Activated naive CD4-positive, alpha-beta T cell treated with anti-CD3 and anti-CD28 coated beads for 36 hours (primary cell): ENCODE measurements at regions of chr12 and their contacts with region 1.

Region 1: GRCh38 chr12:50400598-50401364 is at the start of gene LARP4:
- DNase-seq: peak; percentile 94
- H3K4me3 Mint-ChIP-seq: peak within 1 kb of the TSS; percentile 99
- H3K27ac Mint-ChIP-seq: peak within 1 kb of the TSS; percentile 87
- H3K4me1 Mint-ChIP-seq: peaks cover 19% of the 10 kb centered on the region
- H3K27me3 Mint-ChIP-seq: peaks cover 2% of the 10 kb centered on the region
- total RNA-seq, gene LARP4: 44.7 to 44.9 TPM

Region 2: GRCh38 chr12:50211392-50212070 is 189.2 kb before region 1 on chr12:
- CTCF ChIA-PET with region 1: interaction called, 3 read pairs
- intact Hi-C with region 1: loop called (anchors 2 kb)
- DNase-seq: peak; percentile 38
- H3K4me3 Mint-ChIP-seq: peak overlapping the region; percentile 10
- H3K27ac Mint-ChIP-seq: peak overlapping the region; percentile 88
- H3K4me1 Mint-ChIP-seq: peaks cover 40% of the 10 kb centered on the region
- H3K27me3 Mint-ChIP-seq: no peaks in the 10 kb centered on the region

Region 3: DNA sequence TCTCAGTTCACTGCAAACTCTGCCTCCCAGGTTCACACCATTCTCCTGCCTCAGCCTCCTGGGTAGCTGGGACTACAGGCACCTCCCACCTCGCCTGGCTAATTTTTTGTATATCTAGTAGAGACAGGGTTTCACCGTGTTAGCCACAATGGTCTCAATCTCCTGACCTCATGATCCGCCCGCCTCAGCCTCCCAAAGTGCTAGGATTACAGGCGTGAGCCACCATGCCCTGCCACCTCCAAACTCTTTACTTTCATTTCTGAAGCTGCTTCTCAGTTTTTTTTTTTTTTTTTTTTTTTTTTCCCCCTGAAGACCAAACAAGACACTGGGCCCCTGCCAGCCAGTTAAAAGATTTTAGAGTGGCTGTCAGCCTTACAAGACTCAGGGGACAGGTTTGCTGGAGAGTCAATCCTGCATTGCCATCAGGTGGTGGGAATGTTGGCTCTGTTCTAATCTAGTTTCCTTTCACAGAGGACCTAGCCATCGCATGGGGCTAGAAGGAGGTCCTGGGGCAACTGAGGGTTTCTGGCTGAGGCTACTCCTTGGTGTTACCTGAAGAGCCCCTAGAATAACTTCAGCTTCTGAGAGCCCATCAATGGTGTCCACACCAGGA is 514.2 kb after region 1 on chr12:
- CTCF ChIA-PET with region 1: no interaction called
- intact Hi-C with region 1: no loop called
- DNase-seq: no peak
- H3K4me3 Mint-ChIP-seq: no peak overlapping the region
- H3K27ac Mint-ChIP-seq: no peak overlapping the region
- H3K4me1 Mint-ChIP-seq: no peaks in the 10 kb centered on the region
- H3K27me3 Mint-ChIP-seq: no peaks in the 10 kb centered on the region